ENCODE measurements at regions of chr17 and their contacts with region 1.

Region 1: GRCh38 chr17:42598905-42599304 is 10.3 kb downstream of the RETREG3 start:
- DNase-seq: no peak
- ATAC-seq: no peak
- H3K4me3 ChIP-seq: no peak overlapping the region
- H3K27ac ChIP-seq: no peak overlapping the region
- H3K4me1 ChIP-seq: no peaks in the 10 kb centered on the region
- CTCF ChIP-seq: no peak
- EP300 ChIP-seq: no peak
- POLR2A ChIP-seq: no peak
- RAD21 ChIP-seq: no peak

Region 2: DNA sequence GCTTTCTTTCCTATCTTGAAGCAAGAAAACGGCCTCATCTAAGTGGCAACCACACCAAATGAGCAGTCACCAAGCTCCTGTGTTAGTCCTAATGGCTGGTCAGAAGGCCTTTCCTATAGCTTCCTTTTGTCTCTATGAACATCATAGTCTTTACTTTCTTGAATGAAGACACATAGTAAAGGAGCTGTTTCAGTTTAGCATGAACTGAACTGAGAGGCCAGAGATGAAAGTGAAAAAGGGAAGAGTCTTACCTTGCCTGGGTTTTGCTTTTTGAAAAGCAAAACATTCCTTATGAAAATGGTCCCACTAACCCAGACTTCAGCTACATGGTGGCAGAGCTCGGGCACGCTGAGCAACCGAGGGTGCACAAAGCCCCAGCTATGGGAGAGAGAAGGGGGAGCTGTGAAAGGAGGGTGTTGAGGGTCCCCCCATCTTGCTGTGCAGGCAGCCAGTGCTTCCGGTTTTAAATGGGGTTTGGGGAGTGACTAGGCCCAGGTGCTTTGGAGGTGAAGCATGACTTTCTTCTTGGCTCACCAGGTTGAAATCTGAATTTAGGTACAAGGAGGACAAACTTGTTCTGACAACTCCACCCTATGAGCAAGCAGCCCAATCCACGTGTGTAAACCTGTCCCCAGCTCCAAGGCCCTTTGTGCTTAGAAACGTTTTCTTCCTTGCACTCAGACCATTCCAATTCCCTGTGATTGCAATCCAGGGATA is 12.2 kb before region 1 on chr17:
- CTCF ChIA-PET with region 1: interaction called, 5 read pairs
- POLR2A ChIA-PET with region 1: interaction called, 10 read pairs
- DNase-seq: no peak
- ATAC-seq: no peak
- H3K4me3 ChIP-seq: no peak overlapping the region
- H3K27ac ChIP-seq: no peak overlapping the region
- H3K4me1 ChIP-seq: no peaks in the 10 kb centered on the region
- CTCF ChIP-seq: no peak
- EP300 ChIP-seq: no peak
- POLR2A ChIP-seq: no peak
- RAD21 ChIP-seq: no peak

Region 3: GRCh38 chr17:42623732-42624596 is 25.1 kb after region 1 on chr17:
- CTCF ChIA-PET with region 1: interaction called, 4 read pairs
- POLR2A ChIA-PET with region 1: interaction called, 10 read pairs
- DNase-seq: peak; percentile 80 to 86
- ATAC-seq: peak; percentile 85 to 90
- H3K4me3 ChIP-seq: no peak overlapping the region
- H3K27ac ChIP-seq: peak overlapping the region; percentile 52 to 70; a peak in 5 of 6 replicates
- H3K4me1 ChIP-seq: peaks cover 15% of the 10 kb centered on the region
- CTCF ChIP-seq: peak; percentile 29; the same call in 2 of the 3 replicates
- EP300 ChIP-seq: no peak
- POLR2A ChIP-seq: no peak
- RAD21 ChIP-seq: peak in 1 of 2 experiments; percentile 12; a peak in 2 of 5 replicates

Measured in A549 (cell line).